Heart left ventricle (tissue), 16 donors: ENCODE measurements at regions of chr5 and their contacts with region 1.

Region 1: DNA sequence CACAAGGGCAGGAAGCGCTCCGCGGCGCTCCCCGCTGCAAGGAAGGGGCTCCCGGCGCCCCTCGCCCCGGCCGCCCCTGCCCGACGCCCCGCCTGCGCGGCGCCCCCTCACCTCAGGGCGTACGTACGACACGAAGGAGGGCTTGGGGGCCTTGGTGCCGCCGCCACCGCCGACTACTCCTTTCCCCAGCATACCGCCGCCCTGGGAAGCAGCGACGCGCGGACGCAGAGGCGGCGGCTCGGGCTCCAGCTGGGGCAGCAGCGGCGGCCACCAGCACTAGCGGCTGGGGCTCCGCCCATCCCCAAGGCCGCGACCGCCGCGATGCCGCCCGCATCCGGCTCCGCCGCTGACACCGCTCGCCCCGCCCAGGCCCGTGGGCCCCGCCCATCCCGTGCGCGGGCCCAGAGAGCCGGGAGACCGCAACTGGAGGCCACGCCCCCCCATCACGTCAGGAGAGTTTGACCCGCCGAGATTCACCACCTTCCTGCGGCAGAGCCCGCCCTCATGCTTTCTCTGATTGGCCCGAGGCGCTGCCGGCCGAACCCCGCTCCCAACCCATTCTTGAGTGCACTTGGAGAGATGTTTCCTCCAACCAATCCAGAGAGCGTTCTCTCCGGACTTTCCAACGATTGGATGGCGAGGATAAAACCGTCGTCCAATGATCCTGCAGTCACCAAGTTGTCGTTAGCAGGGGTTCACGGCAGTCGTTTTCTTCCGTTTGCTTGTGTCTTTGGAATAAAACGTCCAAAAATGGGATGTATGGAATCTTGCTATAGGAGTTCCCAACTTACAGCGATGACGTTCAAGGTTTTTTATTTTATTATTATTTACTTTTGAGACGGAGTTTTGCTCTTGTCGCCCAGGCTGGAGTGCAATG is at the start of gene MTMR12:
- DNase-seq: peak; percentile 100
- ATAC-seq: peak; percentile 99 to 100 (median 99)
- H3K4me3 ChIP-seq: peak within 1 kb of the TSS; percentile 70 to 100 (median 90)
- H3K27ac ChIP-seq: peak within 1 kb of the TSS; percentile 95 to 100 (median 98)
- H3K4me1 ChIP-seq: peaks cover 4 to 48% (median 34%) of the 10 kb centered on the region in 12 donors
- H3K27me3 ChIP-seq: no peaks in the 10 kb centered on the region
- CTCF ChIP-seq: peak in 2 of 12 donors; percentile 6 to 11
- POLR2A ChIP-seq: peak; percentile 85 to 90
- total RNA-seq, gene MTMR12: 13.3 to 28.7 (median 21.3) TPM

Region 2: DNA sequence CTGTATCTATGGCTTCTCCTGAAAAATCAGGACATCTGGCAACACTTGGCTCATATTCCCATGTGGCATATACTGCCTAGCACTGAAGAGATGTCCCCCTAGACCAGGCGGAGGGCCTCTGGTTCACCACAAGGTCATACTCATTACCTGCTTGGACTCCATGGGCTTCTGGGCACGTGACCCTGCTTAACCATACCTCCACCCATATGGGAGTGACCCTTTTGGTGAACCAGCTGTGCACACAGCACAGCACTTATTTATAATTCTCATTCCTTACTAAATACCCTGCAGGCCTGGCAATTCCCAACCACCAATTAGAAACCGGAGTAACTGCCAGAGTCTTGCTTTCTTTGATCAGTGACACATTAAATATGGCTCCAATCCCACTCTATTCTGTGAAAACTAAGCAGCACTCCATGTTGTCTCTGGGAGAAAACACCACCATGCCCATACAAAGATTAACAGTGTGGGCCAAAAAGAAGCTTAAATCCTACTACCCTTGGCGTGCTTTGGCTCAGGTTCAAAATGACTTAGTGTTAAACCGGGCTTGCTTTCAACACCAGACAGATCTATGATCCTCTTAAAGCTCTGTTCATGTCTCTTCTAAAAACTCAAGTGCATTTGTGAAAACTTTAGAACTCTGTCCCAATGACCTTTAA is 57.9 kb before region 1 on chr5:
- intact Hi-C with region 1: loop called in 2 of 10 experiments (anchors 5 to 10 kb)
- DNase-seq: no peak
- ATAC-seq: peak; percentile 50 to 91 (median 70)
- H3K4me3 ChIP-seq: no peak overlapping the region
- H3K27ac ChIP-seq: peak overlapping the region in 9 of 12 donors; percentile 6 to 67 (median 35)
- H3K4me1 ChIP-seq: peaks cover 0 to 25% (median 8%) of the 10 kb centered on the region in 12 donors
- H3K27me3 ChIP-seq: no peaks in the 10 kb centered on the region
- CTCF ChIP-seq: no peak
- POLR2A ChIP-seq: no peak

Region 3: GRCh38 chr5:32276173-32276853 is 36.6 kb before region 1 on chr5:
- intact Hi-C with region 1: loop called in 7 of 10 experiments (anchors 1 to 5 kb)
- DNase-seq: no peak
- ATAC-seq: peak; percentile 67 to 82 (median 70)
- H3K4me3 ChIP-seq: no peak overlapping the region
- H3K27ac ChIP-seq: peak overlapping the region in 9 of 12 donors; percentile 26 to 76 (median 56)
- H3K4me1 ChIP-seq: peaks cover 5 to 58% (median 43%) of the 10 kb centered on the region in 12 donors
- H3K27me3 ChIP-seq: no peaks in the 10 kb centered on the region
- CTCF ChIP-seq: no peak
- POLR2A ChIP-seq: no peak